Mammary epithelial cell (primary cell): ENCODE measurements at regions of chr12 and their contacts with region 1.

Region 1: DNA sequence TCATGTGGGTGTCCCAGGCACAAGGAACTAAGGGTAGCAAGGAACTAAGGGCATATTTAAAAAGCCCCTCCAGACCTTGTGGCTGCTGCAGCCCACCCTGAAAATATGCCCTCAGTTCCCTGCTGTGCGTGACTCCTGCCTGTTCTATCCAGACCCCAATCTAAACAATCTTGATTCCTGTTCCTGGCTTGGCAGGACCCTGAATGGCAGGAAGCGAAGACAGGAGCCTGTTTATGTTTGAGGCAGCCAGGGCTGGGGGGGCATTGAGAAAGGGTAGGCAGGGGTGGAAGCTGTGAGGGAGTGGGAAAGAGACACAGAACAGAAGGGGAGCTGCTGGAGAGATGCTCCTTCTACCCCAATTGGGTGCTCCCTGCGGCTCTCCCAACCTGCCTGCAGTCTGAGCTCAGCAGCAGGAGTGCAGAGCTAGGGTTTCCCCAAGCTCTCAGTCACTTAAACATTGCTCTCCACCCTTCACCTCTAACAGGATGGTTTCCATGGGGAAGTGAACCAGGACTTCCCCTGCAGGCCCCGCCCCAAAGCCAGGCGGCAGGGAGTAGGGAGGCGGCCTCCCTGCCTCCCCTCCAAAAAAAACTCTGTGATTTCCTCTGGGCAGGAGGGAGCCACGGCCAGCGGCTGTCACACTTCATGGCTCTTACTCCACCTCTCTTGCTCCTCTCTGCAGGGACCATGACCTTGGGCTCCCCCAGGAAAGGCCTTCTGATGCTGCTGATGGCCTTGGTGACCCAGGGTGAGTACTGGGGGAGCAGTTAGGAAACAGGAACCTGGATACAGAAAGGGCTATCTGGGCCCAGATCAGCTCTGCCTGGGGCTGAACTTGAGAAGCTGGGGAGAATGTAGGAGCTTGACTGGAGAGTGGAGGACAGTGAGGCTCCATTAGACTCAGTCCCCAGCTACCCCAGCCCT is 4.7 kb downstream of the ACVRL1 start:
- DNase-seq: no peak
- H3K4me3 ChIP-seq: no peak overlapping the region
- H3K27ac ChIP-seq: no peak overlapping the region
- H3K4me1 ChIP-seq: no peaks in the 10 kb centered on the region
- H3K27me3 ChIP-seq: peaks cover 19% of the 10 kb centered on the region
- CTCF ChIP-seq: no peak

Region 2: DNA sequence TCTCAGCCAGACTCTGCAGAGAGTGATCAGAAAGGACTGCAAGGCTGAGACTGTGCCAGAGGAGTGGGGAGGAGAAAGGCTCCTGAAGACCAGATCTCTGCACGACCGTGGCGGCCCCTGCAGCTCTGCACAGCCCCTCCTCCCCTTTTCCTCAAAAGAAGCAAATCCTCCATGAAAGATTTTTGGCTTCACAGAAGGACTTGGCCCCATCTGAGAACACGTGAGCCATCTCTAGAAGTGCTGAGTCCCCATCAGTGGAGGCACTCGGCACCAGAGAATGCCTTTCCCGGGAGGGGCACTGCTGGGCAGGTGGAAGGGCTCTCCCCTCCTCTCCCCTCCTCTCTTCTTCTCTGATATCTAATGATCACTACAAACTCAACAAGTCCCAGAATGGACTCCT is 70.3 kb before region 1 on chr12:
- CTCF ChIA-PET with region 1: no interaction called
- dilution Hi-C with region 1: loop called (anchors 5 kb)
- in situ Hi-C with region 1: no loop called
- intact Hi-C with region 1: no loop called
- DNase-seq: no peak
- H3K4me3 ChIP-seq: no peak overlapping the region
- H3K27ac ChIP-seq: no peak overlapping the region
- H3K4me1 ChIP-seq: no peaks in the 10 kb centered on the region
- H3K27me3 ChIP-seq: peaks cover 15% of the 10 kb centered on the region
- CTCF ChIP-seq: no peak

Region 3: GRCh38 chr12:51932218-51933076 is 20.4 kb after region 1 on chr12:
- CTCF ChIA-PET with region 1: no interaction called
- dilution Hi-C with region 1: no loop called
- in situ Hi-C with region 1: no loop called
- intact Hi-C with region 1: no loop called
- DNase-seq: no peak
- H3K4me3 ChIP-seq: no peak overlapping the region
- H3K27ac ChIP-seq: no peak overlapping the region
- H3K4me1 ChIP-seq: no peaks in the 10 kb centered on the region
- H3K27me3 ChIP-seq: no peaks in the 10 kb centered on the region
- CTCF ChIP-seq: no peak